Psoas muscle (tissue), 8 donors: ENCODE measurements at regions of chr6 and their contacts with region 1.

Region 1: GRCh38 chr6:36752886-36753506 is 55.4 kb downstream of the RAB44 start:
- DNase-seq: peak; percentile 34 to 75
- ATAC-seq: peak; percentile 84 to 97 (median 90)
- H3K4me3 ChIP-seq: no peak overlapping the region
- H3K27ac ChIP-seq: peak overlapping the region; percentile 64
- H3K4me1 ChIP-seq: peaks cover 26% of the 10 kb centered on the region
- H3K27me3 ChIP-seq: no peaks in the 10 kb centered on the region
- CTCF ChIP-seq: no peak

Region 2: DNA sequence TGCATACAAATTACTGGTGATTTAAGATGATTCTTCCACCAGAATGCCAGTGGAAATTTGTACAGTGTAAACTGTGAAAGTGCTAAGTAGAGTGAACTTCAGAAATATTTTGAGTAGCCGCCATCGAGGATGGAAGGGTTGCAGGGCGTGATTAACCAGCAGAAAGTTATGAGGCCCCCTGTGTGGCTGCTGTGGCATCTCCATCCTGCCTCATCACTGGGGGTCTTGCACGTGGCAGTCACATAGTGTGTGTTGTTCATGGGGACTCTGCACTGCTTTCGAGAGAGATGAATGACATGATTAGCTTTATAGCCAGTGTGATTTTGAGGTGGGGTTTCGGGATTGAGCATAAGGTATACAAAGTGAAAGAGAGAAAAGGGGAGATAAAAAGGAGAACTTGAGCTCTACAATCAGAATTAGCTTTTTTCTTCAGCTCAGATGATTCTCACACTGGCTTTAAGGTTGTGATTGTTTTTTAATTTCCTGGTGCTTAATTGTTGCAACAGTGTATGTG is 283.8 kb before region 1 on chr6:
- intact Hi-C with region 1: no loop called
- DNase-seq: no peak
- ATAC-seq: no peak
- H3K4me3 ChIP-seq: no peak overlapping the region
- H3K27ac ChIP-seq: no peak overlapping the region
- H3K4me1 ChIP-seq: no peaks in the 10 kb centered on the region
- H3K27me3 ChIP-seq: no peaks in the 10 kb centered on the region
- CTCF ChIP-seq: no peak

Region 3: GRCh38 chr6:36697481-36697903 is 55.5 kb before region 1 on chr6 and contains the start of gene RAB44:
- intact Hi-C with region 1: loop called in 1 of 2 experiments (anchors 5 kb)
- DNase-seq: peak in 1 of 2 donors; percentile 45
- ATAC-seq: no peak
- H3K4me3 ChIP-seq: no peak within 1 kb of the TSS
- H3K27ac ChIP-seq: no peak within 1 kb of the TSS
- H3K4me1 ChIP-seq: peaks cover 7% of the 10 kb centered on the region
- H3K27me3 ChIP-seq: no peaks in the 10 kb centered on the region
- CTCF ChIP-seq: no peak
- total RNA-seq, gene RAB44: 0.06 TPM in 1 of 4 donors, not detected in the others

Region 4: DNA sequence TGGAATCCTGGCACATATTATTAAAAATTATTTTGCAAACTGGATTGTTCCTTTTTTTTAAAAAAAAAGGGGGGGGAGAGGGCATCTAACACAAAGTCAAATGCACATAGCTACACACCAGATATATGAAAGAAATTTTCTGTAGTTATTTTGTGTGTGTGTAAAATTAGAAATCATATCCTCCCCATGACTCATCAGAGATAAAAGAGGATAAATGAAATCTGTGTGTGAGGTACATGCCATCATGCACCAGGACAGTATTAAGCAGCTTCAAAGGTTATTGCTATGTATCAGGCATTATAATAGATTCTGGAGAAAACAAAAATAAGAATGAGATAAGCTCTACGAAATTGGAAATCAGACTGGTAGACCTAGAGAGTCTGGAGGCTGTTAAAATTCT is 1881.5 kb after region 1 on chr6:
- intact Hi-C with region 1: no loop called
- DNase-seq: no peak
- ATAC-seq: peak in 3 of 4 donors; percentile 25 to 37 (median 36)
- H3K4me3 ChIP-seq: no peak overlapping the region
- H3K27ac ChIP-seq: no peak overlapping the region
- H3K4me1 ChIP-seq: peaks cover 19% of the 10 kb centered on the region
- H3K27me3 ChIP-seq: no peaks in the 10 kb centered on the region
- CTCF ChIP-seq: no peak